Calu3 (cell line): ENCODE measurements at regions of chr5 and their contacts with region 1.

Region 1: DNA sequence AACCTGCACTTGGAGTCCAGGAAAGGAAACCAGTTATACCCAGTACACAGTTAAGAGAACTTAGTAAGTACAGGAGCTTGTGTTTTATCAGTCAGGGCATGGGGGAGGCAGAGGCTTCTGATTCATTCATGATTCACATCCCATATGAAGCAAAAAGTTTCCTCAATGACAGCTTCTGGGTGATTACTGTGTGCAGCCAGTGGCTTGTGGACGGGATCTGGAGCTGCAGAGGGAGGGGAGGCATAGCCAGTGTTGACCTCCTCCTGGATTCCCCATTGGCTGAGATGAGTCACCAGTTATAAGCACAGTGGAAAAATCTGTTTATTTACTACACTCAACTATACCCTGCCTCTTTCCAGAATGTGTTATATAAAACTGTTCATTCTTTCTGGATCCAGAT is 17.7 kb downstream of the IL31RA start:
- DNase-seq: peak; percentile 71
- H3K4me3 Mint-ChIP-seq: no peak overlapping the region
- H3K27ac Mint-ChIP-seq: peak overlapping the region; percentile 67
- H3K4me1 Mint-ChIP-seq: peaks cover 7% of the 10 kb centered on the region
- H3K27me3 Mint-ChIP-seq: no peaks in the 10 kb centered on the region
- CTCF ChIP-seq: no peak

Region 2: DNA sequence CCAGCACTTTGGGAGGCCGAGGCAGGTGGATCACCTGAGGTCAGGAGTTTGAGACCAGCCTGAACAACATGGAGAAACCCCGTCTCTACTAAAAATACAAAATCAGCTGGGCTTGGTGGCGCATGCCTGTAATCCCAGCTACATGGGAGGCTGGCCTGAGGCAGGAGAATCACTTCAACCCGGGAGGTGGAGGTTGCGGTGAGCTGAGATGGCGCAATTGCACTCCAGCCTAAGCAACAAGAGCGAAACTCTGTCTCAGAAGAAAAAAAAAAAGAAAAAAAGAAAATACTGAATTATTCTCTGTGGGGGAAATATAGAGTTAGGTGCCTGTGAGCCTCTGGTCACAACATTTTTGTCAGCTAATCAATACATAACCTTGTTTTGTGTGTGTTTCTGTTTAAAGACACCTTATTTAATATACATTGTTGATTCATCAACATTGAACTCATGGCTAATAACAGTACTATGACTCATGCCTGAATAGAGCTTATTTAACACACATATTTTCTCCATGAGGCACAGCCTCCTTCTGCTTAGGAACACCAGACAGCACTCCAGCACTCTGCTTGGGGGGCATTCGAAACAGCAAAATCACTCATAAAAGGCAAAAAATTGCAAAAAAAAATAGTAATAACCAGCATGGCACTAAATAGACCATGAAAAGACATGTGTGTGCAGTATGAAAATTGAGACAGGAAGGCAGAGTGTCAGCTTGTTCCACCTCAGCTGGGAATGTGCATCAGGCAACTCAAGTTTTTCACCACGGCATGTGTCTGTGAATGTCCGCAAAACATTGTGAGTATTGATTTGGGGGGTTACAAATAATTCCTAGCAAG is 17.8 kb before region 1 on chr5 and contains the start of gene IL31RA:
- CTCF ChIA-PET with region 1: interaction called, 11 read pairs
- intact Hi-C with region 1: no loop called
- DNase-seq: peak; percentile 40
- H3K4me3 Mint-ChIP-seq: peak within 1 kb of the TSS; percentile 71
- H3K27ac Mint-ChIP-seq: peak within 1 kb of the TSS; percentile 71
- H3K4me1 Mint-ChIP-seq: peaks cover 25% of the 10 kb centered on the region
- H3K27me3 Mint-ChIP-seq: no peaks in the 10 kb centered on the region
- CTCF ChIP-seq: no peak
- total RNA-seq, gene IL31RA: 2.4 and 3.2 TPM in 2 replicates